ENCODE measurements at regions of chr11 and their contacts with region 1.

Region 1: DNA sequence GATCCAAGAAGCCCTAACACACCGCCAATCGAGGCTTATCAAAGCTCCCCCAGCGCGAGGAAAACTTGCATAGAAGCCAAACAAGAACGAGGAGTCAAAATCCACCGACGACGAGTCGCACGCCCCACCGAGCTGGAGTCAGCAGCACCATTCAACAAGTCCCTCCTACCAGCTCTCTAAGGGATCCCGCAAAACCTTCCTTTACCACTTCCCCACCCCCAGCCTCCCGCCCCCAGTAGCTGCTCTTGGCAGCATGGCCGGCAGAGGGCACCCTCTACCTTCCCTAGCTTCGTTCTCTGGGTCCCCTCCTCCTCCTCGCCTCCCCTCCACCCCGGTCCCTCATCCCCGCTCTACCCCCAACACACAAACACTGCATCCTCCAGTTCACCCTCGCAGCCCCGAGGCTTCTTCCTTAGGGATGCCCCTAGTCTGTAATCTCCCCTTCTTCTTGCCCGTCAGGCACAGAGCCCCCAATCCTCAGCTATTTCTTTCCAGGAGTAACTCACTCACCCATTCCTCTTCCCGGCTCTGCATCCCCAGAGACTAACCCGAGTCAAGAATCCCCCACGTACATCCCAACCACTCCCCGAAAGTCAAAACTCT is 1.3 kb downstream of the BDNF start:
- DNase-seq: peak; percentile 92
- ATAC-seq: peak; percentile 53
- H3K4me3 ChIP-seq: peak overlapping the region; percentile 85
- H3K27ac ChIP-seq: peak overlapping the region; percentile 92
- H3K4me1 ChIP-seq: peaks cover 6% of the 10 kb centered on the region; the same call in 1 of the 2 replicates
- H3K27me3 ChIP-seq: no peaks in the 10 kb centered on the region
- CTCF ChIP-seq: peak; percentile 84
- POLR2A ChIP-seq: peak; percentile 82
- RAD21 ChIP-seq: peak; percentile 85

Region 2: DNA sequence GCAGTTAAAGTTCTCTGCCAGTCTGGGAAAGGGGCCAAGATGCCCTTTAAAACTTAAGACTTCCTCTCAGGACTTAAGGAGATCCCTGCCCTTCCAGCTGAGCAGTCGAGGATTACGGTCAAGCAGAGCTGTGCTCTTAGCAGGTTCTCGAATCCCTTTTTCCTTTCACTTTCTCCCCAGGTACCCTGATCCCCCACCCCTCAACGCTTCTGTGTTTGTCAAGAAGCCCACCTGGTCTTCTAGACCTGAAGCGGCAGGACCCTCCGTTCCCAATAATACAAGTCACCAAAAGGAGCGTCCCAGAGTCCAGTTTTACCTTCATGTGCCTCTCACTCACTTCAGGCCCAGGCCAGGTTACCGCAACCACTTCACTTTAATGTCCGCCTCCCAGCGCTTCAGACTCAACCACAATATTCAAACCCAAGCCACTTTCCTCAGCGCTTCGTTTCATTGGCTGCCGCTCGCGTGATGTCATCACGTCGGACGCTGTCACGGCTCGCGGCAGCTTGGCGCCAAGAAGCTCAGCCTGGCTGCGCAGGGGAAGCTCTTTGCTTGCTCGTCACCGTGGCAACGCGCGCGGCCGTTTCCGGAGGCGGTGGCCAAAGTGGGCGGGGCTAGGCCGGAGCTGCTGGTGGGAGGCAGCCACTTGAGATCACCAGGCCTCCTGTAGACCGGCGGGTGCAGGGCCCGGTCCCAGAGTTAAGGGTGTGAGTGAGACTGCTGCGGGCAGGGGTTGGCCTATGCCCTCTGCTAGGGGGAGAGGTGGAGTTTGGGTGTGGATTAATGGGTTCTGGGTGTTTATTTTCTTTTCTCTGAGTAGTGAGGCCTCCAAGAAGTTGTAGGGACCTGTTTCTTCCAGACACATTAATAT is 409.0 kb after region 1 on chr11 and contains the starts of genes KIF18A and METTL15:
- CTCF ChIA-PET with region 1: no interaction called
- POLR2A ChIA-PET with region 1: interaction called, 16 read pairs
- dilution Hi-C with region 1: no loop called
- in situ Hi-C with region 1: loop called (anchors 10 kb)
- intact Hi-C with region 1: loop called (anchors 1 kb)
- DNase-seq: peak; percentile 99
- ATAC-seq: peak; percentile 89
- H3K4me3 ChIP-seq: peak within 1 kb of the TSS; percentile 67
- H3K27ac ChIP-seq: peak within 1 kb of the TSS; percentile 69
- H3K4me1 ChIP-seq: no peaks in the 10 kb centered on the region
- H3K27me3 ChIP-seq: no peaks in the 10 kb centered on the region
- CTCF ChIP-seq: no peak
- POLR2A ChIP-seq: peak; percentile 96
- RAD21 ChIP-seq: peak; percentile 26
- total RNA-seq, gene KIF18A: 24.4 and 37.2 TPM in 2 replicates
- total RNA-seq, gene METTL15: 24.4 and 30.5 TPM in 2 replicates

Region 3: DNA sequence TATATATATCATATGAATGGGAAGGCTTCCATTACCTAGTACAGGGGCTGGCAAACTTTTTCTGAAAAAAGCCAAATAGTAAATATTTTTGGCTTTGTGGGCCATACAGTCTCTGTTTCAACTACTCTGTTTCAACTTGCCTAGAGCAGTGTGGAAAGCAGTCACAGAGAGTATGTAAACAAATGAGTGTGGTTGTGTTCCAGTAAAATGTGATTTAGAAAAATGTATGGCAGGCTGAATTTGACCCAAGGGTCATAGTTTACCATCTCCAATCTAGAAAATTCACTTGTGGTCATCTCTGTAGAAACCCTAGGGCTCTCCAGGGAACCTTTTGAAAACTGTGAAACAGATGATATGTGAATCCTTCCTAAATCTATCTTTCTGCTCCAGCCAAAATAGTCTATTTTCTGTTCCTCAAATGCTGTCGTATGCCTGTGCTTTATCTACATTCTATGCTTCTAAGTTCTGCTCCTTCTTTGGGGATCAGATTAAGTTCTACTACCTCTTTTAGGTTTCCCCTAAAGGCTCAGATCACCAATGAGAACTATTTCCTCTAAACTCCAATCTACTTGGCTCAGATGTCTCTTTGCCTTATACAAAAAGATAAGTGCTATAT is 765.4 kb after region 1 on chr11:
- CTCF ChIA-PET with region 1: interaction called, 5 read pairs
- POLR2A ChIA-PET with region 1: interaction called, 7 read pairs
- dilution Hi-C with region 1: no loop called
- in situ Hi-C with region 1: no loop called
- intact Hi-C with region 1: loop called (anchors 5 kb)
- DNase-seq: peak; percentile 86
- ATAC-seq: peak; percentile 77
- H3K4me3 ChIP-seq: no peak overlapping the region
- H3K27ac ChIP-seq: peak overlapping the region; percentile 98
- H3K4me1 ChIP-seq: peaks cover 22% of the 10 kb centered on the region
- H3K27me3 ChIP-seq: no peaks in the 10 kb centered on the region
- CTCF ChIP-seq: no peak
- POLR2A ChIP-seq: no peak
- RAD21 ChIP-seq: no peak; the same call in none of the 2 replicates

Region 4: GRCh38 chr11:28674433-28675103 is 975.6 kb after region 1 on chr11:
- CTCF ChIA-PET with region 1: no interaction called
- POLR2A ChIA-PET with region 1: no interaction called
- dilution Hi-C with region 1: no loop called
- in situ Hi-C with region 1: no loop called
- intact Hi-C with region 1: loop called (anchors 5 kb)
- DNase-seq: peak; percentile 67
- ATAC-seq: peak; percentile 75
- H3K4me3 ChIP-seq: no peak overlapping the region
- H3K27ac ChIP-seq: peak overlapping the region; percentile 52
- H3K4me1 ChIP-seq: peaks cover 4% of the 10 kb centered on the region; the same call in 1 of the 2 replicates
- H3K27me3 ChIP-seq: no peaks in the 10 kb centered on the region
- CTCF ChIP-seq: peak; percentile 32; the same call in 1 of the 2 replicates
- POLR2A ChIP-seq: no peak
- RAD21 ChIP-seq: peak; percentile 36; the same call in 1 of the 2 replicates

Region 5: DNA sequence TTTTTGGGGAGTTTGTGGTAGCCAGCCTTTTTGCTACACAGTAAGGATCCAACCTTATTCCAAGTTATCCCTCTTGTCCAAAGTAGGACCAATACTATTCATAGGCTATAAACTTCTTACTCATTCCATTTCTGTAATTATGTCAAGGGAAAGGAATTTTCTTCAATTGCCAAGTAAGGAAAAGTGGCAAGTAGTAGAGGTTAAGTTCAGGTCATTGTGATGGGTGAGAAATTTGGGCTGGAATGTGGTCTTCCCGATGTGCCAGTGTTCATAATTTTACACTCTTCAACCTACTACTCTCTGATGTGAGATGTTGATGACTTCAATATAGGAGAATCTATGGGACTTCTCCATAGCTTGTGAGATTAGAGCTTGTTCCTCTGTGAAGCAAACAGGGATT is 1058.0 kb after region 1 on chr11:
- CTCF ChIA-PET with region 1: no interaction called
- POLR2A ChIA-PET with region 1: no interaction called
- dilution Hi-C with region 1: no loop called
- in situ Hi-C with region 1: no loop called
- intact Hi-C with region 1: loop called (anchors 1 kb)
- DNase-seq: peak; percentile 89
- ATAC-seq: peak; percentile 65
- H3K4me3 ChIP-seq: no peak overlapping the region
- H3K27ac ChIP-seq: peak overlapping the region; percentile 96
- H3K4me1 ChIP-seq: peaks cover 10% of the 10 kb centered on the region; the same call in 1 of the 2 replicates
- H3K27me3 ChIP-seq: no peaks in the 10 kb centered on the region
- CTCF ChIP-seq: no peak
- POLR2A ChIP-seq: 0 out of 2 replicates have a peak, but pooled peaks have one; percentile 8
- RAD21 ChIP-seq: no peak

Region 6: DNA sequence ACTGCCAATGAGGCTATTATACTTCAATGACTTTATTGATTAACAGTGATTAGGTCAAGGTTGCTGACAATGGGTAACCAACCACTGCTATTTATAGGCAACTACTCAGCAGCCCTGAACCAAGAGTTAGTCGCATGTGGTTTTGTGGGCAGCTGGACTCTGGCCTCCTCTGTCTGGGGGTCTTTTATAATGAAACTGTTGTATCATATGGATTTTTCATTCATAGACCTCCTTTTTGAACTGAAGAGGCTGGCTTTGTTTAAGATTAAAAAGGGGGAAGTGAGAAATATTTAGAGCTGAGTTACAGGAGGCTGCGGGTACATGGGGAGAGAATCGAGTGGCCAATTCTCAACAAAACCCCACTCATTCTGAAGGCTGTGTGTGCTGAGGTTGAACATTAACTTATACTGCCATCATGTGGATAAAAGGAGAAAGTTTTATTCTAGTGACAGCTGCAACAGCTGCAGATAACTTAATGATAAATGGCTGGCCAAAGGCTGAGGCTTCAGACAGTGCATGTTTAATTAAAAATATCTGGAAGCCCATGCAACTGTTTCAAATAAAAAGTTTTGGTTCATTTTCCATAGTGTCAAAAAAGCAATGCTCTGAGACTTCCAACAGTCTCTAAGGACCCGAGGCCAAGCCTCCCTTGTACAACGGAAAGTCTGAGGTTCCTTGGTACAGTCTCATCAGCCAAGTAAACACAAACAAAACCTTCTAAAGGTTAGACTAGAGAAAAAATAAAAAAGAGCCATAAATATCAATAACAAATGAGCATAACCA is 1635.2 kb after region 1 on chr11:
- CTCF ChIA-PET with region 1: interaction called, 3 read pairs
- POLR2A ChIA-PET with region 1: interaction called, 3 read pairs
- dilution Hi-C with region 1: no loop called
- in situ Hi-C with region 1: loop called (anchors 5 kb)
- intact Hi-C with region 1: loop called (anchors 1 kb)
- DNase-seq: peak; percentile 88
- ATAC-seq: peak; percentile 67
- H3K4me3 ChIP-seq: no peak overlapping the region
- H3K27ac ChIP-seq: peak overlapping the region; percentile 93
- H3K4me1 ChIP-seq: peaks cover 14% of the 10 kb centered on the region
- H3K27me3 ChIP-seq: no peaks in the 10 kb centered on the region
- CTCF ChIP-seq: peak; percentile 76
- POLR2A ChIP-seq: no peak
- RAD21 ChIP-seq: peak; percentile 91

Measured in IMR-90 (cell line).